Sciatic nerve (tissue), 2 donors: ENCODE measurements at regions of chr16 and their contacts with region 1.

Region 1: DNA sequence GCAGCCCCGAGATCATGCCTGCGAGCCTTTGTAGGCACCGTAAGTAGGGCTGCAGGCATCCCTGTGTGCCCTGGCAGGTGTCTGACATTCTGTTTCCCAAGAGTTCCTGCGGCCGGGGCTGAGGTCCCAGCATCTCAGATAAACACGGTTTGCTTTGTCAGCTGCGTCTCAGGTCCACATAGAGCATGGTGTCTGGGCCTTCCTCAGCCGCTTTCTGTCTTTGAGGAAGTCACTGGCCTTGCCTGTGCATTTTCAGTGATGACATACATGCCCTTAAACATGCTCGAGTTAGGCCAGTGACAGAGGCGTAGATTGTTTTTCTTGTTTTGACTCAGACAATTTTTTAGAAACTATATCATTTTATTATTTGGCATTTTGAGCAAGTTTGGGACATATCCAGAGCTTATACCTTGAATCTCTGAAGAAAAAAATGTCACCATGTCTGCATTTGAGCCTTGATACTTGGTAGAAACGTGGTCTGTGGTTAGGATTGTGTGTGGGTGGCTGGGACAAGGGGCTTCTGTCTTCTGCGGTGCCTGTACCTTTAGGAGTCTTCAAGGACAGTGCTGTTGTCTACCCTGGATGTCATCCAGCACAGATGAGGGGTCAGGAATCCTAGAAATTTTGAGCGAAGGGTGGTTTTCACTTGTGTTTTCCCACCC is 105.8 kb downstream of the SNX29 start:
- DNase-seq: peak; percentile 32
- ATAC-seq: no peak

Region 2: GRCh38 chr16:10368969-10369551 is 1713.3 kb before region 1 on chr16:
- intact Hi-C with region 1: loop called (anchors 5 kb)
- DNase-seq: no peak
- ATAC-seq: no peak